Heart left ventricle (tissue), 16 donors: ENCODE measurements at regions of chr3 and their contacts with region 1.

Region 1: GRCh38 chr3:30227571-30228301 is 378.7 kb upstream of the TGFBR2 start:
- DNase-seq: no peak
- ATAC-seq: peak; percentile 34 to 76 (median 72)
- H3K4me3 ChIP-seq: no peak overlapping the region
- H3K27ac ChIP-seq: peak overlapping the region in 11 of 12 donors; percentile 4 to 79 (median 42)
- H3K4me1 ChIP-seq: peaks cover 4 to 62% (median 35%) of the 10 kb centered on the region in 12 donors
- H3K27me3 ChIP-seq: no peaks in the 10 kb centered on the region
- CTCF ChIP-seq: no peak
- POLR2A ChIP-seq: no peak

Region 2: DNA sequence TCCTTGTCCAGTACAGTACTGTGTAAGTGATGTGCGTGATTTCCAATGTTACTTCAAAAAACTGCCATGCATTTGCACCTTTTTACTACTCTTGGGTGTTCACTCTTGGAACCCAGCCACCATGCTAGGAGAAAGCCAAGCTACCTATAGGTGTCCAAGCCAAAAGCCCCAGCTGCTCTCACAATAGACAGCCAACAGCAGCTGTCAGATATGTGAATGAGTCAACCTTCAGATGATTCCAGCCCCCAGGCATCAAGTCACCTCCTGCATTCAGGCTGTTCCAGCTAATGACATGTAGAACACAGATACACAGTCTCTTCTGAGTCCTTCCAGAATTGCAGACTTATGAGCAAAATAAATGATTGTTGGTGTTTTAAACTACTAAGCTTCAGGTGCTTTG is 39.0 kb before region 1 on chr3:
- intact Hi-C with region 1: no loop called
- DNase-seq: peak in 4 of 5 donors; percentile 24 to 38 (median 26)
- ATAC-seq: peak in 3 of 4 donors; percentile 81 to 83 (median 82)
- H3K4me3 ChIP-seq: no peak overlapping the region
- H3K27ac ChIP-seq: no peak overlapping the region
- H3K4me1 ChIP-seq: peaks cover 0 to 33% (median 5%) of the 10 kb centered on the region in 12 donors
- H3K27me3 ChIP-seq: no peaks in the 10 kb centered on the region
- CTCF ChIP-seq: no peak
- POLR2A ChIP-seq: no peak

Region 3: DNA sequence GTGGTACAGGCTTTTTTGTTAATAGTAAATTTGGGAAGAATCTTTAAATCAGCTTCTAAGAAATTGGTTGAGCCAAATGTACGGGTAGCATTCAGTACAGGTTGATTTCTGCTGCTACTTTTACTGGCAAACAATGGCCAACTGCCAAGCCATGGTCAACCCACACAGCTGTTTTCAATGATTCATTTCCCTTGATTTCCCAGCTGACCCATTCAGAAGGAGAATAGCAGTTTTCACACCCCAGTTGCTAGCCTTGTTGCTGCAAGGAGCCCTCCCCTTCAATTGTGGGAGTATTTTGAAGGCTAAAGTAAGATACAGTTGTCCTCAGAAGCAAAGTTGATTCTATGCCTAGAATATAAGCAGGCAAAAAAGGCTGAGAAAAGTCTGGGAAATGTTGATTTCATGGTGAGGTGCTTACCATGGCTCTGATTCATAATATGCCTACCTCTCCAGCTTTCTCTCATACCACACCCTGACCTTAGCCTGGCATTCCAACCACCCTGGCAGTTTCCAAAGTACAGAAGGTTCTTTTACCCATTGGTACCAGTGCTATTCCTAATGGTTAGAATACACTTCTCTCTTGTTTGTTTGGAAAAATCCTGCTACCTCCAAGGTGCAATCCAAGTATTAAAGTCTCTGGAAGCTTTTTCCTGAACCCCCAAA is 58.4 kb after region 1 on chr3:
- intact Hi-C with region 1: loop called in 4 of 10 experiments (anchors 5 kb)
- DNase-seq: peak; percentile 60 to 86 (median 76)
- ATAC-seq: peak; percentile 83 to 95 (median 94)
- H3K4me3 ChIP-seq: no peak overlapping the region
- H3K27ac ChIP-seq: peak overlapping the region in 11 of 12 donors; percentile 2 to 81 (median 57)
- H3K4me1 ChIP-seq: peaks cover 0 to 62% (median 23%) of the 10 kb centered on the region in 12 donors
- H3K27me3 ChIP-seq: no peaks in the 10 kb centered on the region
- CTCF ChIP-seq: no peak
- POLR2A ChIP-seq: no peak

Region 4: DNA sequence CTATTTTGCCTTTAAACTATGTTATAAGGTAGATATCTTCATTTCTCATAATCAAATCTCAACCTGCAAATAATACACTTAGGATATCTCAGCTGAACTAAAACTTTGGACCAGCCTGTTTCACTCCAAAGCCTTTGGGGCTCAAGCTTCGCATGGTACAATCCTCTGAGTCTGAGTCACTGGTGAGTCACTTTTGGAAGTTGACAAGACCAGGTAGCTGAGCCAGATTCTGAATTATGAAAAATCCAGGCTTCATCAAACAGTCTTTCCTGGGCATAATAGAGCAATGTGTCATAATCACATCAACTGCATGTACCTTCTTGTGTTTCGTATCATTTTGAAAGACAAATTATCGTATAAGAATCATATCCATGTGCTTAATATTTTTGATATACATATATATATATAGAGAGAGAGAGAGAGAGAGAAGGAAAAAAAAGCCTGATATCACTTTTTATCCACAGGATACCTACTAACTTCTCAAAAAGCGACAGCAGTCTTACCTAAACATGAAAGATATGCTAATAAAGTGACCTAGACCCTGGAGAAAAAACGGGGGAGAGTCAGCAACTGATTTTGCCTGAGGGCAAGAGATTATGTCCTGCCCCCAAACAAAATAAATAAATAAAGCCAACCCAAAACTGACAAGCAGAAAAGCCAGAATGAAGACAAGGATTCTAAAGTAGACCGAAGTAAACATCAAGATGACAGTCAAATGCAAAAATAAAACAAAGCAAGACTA is 114.8 kb after region 1 on chr3:
- intact Hi-C with region 1: loop called in 1 of 10 experiments (anchors 5 kb)
- DNase-seq: peak in 2 of 5 donors; percentile 24 to 58
- ATAC-seq: peak; percentile 80 to 95 (median 94)
- H3K4me3 ChIP-seq: no peak overlapping the region
- H3K27ac ChIP-seq: peak overlapping the region; percentile 6 to 70 (median 51)
- H3K4me1 ChIP-seq: peaks cover 0 to 32% (median 16%) of the 10 kb centered on the region in 12 donors
- H3K27me3 ChIP-seq: no peaks in the 10 kb centered on the region
- CTCF ChIP-seq: no peak
- POLR2A ChIP-seq: no peak

Region 5: DNA sequence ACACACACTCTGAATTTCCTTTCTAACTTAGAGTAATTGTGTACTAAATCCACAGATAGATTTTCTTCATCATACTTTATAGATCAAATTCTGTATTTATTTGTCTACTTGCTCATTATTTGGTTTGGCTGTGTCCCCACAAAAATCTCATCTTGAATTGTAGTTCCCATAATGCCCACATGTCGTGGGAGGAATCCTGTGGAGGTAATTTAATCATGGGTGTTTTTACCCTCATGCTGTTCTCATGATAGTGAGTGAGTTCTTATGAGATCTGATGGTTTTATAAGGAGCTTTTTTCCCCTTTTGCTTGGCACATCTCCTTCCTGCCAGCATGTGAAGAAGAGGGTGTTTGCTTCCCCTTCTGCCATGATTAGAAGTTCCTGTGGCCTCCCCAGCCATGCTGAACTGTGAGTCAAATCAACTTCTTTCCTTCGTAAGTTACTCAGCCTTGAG is 180.4 kb after region 1 on chr3:
- intact Hi-C with region 1: no loop called
- DNase-seq: no peak
- ATAC-seq: no peak
- H3K4me3 ChIP-seq: no peak overlapping the region
- H3K27ac ChIP-seq: no peak overlapping the region
- H3K4me1 ChIP-seq: peaks cover 0 to 2% (median 0%) of the 10 kb centered on the region in 12 donors
- H3K27me3 ChIP-seq: no peaks in the 10 kb centered on the region
- CTCF ChIP-seq: peak in 2 of 12 donors; percentile 7 to 28
- POLR2A ChIP-seq: no peak

Region 6: GRCh38 chr3:30437171-30437601 is 209.4 kb after region 1 on chr3:
- intact Hi-C with region 1: loop called in 1 of 10 experiments (anchors 10 kb)
- DNase-seq: peak in 4 of 5 donors; percentile 33 to 70 (median 52)
- ATAC-seq: peak in 3 of 4 donors; percentile 48 to 76 (median 74)
- H3K4me3 ChIP-seq: no peak overlapping the region
- H3K27ac ChIP-seq: peak overlapping the region; percentile 19 to 83 (median 55)
- H3K4me1 ChIP-seq: peaks cover 0 to 47% (median 27%) of the 10 kb centered on the region in 12 donors
- H3K27me3 ChIP-seq: no peaks in the 10 kb centered on the region
- CTCF ChIP-seq: peak in 3 of 12 donors; percentile 1 to 24 (median 14)
- POLR2A ChIP-seq: no peak

Region 7: GRCh38 chr3:30518181-30518864 is 290.6 kb after region 1 on chr3:
- intact Hi-C with region 1: loop called in 1 of 10 experiments (anchors 5 kb)
- DNase-seq: peak in 4 of 5 donors; percentile 26 to 52 (median 36)
- ATAC-seq: peak; percentile 89 to 94 (median 92)
- H3K4me3 ChIP-seq: no peak overlapping the region
- H3K27ac ChIP-seq: peak overlapping the region; percentile 34 to 84 (median 73)
- H3K4me1 ChIP-seq: peaks cover 0 to 45% (median 29%) of the 10 kb centered on the region in 12 donors
- H3K27me3 ChIP-seq: no peaks in the 10 kb centered on the region
- CTCF ChIP-seq: peak in 7 of 12 donors; percentile 9 to 50 (median 26)
- POLR2A ChIP-seq: no peak

Region 8: GRCh38 chr3:30681643-30682211 is 454.0 kb after region 1 on chr3:
- intact Hi-C with region 1: loop called in 1 of 10 experiments (anchors 5 kb)
- DNase-seq: peak; percentile 59 to 78 (median 69)
- ATAC-seq: peak; percentile 53 to 76 (median 75)
- H3K4me3 ChIP-seq: peak overlapping the region in 2 of 12 donors; percentile 3 to 6
- H3K27ac ChIP-seq: peak overlapping the region; percentile 44 to 81 (median 74)
- H3K4me1 ChIP-seq: peaks cover 10 to 95% (median 81%) of the 10 kb centered on the region in 12 donors
- H3K27me3 ChIP-seq: no peaks in the 10 kb centered on the region
- CTCF ChIP-seq: no peak
- POLR2A ChIP-seq: no peak